Caco-2 (cell line): ENCODE measurements at regions of chr3 and their contacts with region 1.

Region 1: GRCh38 chr3:13895155-13896105 is 15.6 kb upstream of the WNT7A start:
- DNase-seq: peak; percentile 93 to 95
- H3K4me3 ChIP-seq: peak overlapping the region; percentile 53
- H3K4me3 Mint-ChIP-seq: peak overlapping the region; percentile 85
- H3K27ac Mint-ChIP-seq: peak overlapping the region; percentile 54
- H3K4me1 ChIP-seq: no peaks in the 10 kb centered on the region
- H3K4me1 Mint-ChIP-seq: no peaks in the 10 kb centered on the region
- H3K27me3 ChIP-seq: no peaks in the 10 kb centered on the region
- H3K27me3 Mint-ChIP-seq: no peaks in the 10 kb centered on the region
- CTCF ChIP-seq: no peak

Region 2: DNA sequence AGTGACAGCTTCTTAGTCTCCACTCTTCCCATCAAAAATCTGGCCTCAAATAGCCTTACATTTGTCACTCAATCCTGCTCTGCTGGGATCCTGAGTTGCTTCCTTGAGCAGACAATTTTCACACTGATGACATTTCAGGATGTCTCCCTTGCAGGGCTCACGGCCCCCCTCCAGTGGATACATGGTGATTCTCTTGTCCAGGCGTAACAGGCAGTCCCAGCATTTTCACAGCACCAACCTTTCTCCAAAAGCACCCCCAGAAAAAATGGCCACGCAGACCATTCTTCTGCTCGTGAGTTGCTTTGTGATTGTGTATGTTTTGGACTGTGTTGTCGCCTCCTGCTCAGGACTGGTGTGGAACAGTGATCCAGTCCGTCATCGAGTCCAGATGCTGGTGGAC is 31.9 kb after region 1 on chr3:
- CTCF ChIA-PET with region 1: no interaction called
- POLR2A ChIA-PET with region 1: no interaction called
- intact Hi-C with region 1: loop called (anchors 2 kb)
- DNase-seq: peak in 1 of 2 experiments; percentile 43
- H3K4me3 ChIP-seq: no peak overlapping the region
- H3K4me3 Mint-ChIP-seq: no peak overlapping the region
- H3K27ac Mint-ChIP-seq: no peak overlapping the region
- H3K4me1 ChIP-seq: no peaks in the 10 kb centered on the region
- H3K4me1 Mint-ChIP-seq: no peaks in the 10 kb centered on the region
- H3K27me3 ChIP-seq: no peaks in the 10 kb centered on the region
- H3K27me3 Mint-ChIP-seq: peaks cover 4% of the 10 kb centered on the region
- CTCF ChIP-seq: peak; percentile 20 to 61

Region 3: GRCh38 chr3:14113965-14114635 is 218.7 kb after region 1 on chr3:
- CTCF ChIA-PET with region 1: interaction called, 38 read pairs
- POLR2A ChIA-PET with region 1: no interaction called
- intact Hi-C with region 1: loop called (anchors 1 kb)
- DNase-seq: peak; percentile 62 to 66
- H3K4me3 ChIP-seq: no peak overlapping the region
- H3K4me3 Mint-ChIP-seq: no peak overlapping the region
- H3K27ac Mint-ChIP-seq: no peak overlapping the region
- H3K4me1 ChIP-seq: peaks cover 8% of the 10 kb centered on the region; the same call in 1 of the 2 replicates
- H3K4me1 Mint-ChIP-seq: no peaks in the 10 kb centered on the region
- H3K27me3 ChIP-seq: no peaks in the 10 kb centered on the region
- H3K27me3 Mint-ChIP-seq: no peaks in the 10 kb centered on the region
- CTCF ChIP-seq: peak; percentile 42 to 68

Region 4: GRCh38 chr3:14144423-14145075 is 249.1 kb after region 1 on chr3:
- CTCF ChIA-PET with region 1: interaction called, 12 read pairs
- POLR2A ChIA-PET with region 1: interaction called, 3 read pairs
- intact Hi-C with region 1: no loop called
- DNase-seq: peak; percentile 77 to 85
- H3K4me3 ChIP-seq: no peak overlapping the region
- H3K4me3 Mint-ChIP-seq: peak overlapping the region; percentile 47
- H3K27ac Mint-ChIP-seq: peak overlapping the region; percentile 93
- H3K4me1 ChIP-seq: peaks cover 26% of the 10 kb centered on the region
- H3K4me1 Mint-ChIP-seq: peaks cover 14% of the 10 kb centered on the region
- H3K27me3 ChIP-seq: no peaks in the 10 kb centered on the region
- H3K27me3 Mint-ChIP-seq: no peaks in the 10 kb centered on the region
- CTCF ChIP-seq: no peak

Region 5: DNA sequence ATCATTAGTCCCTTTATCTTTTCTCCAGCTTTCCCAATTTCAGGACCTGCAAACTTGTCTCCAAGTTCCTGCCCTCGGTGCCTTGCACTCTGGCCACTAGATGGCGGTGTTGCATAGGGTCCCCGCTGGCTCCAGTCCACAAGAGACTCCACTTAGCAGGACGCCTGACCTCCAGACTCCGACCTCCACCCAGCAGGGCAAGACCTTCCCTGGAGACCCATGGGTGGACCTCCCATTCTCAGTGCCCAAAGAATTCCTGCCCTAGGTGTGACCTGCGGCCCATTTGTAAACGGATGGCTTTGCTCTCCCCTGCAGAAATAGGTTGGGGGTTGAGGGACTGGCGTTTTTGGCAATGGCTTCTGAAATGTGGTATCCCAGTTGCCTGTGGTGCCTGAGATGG is 365.8 kb after region 1 on chr3:
- CTCF ChIA-PET with region 1: no interaction called
- POLR2A ChIA-PET with region 1: no interaction called
- intact Hi-C with region 1: loop called (anchors 5 kb)
- DNase-seq: peak; percentile 87 to 91
- H3K4me3 ChIP-seq: no peak overlapping the region
- H3K4me3 Mint-ChIP-seq: no peak overlapping the region
- H3K27ac Mint-ChIP-seq: no peak overlapping the region
- H3K4me1 ChIP-seq: peaks cover 29% of the 10 kb centered on the region
- H3K4me1 Mint-ChIP-seq: peaks cover 27% of the 10 kb centered on the region
- H3K27me3 ChIP-seq: no peaks in the 10 kb centered on the region
- H3K27me3 Mint-ChIP-seq: no peaks in the 10 kb centered on the region
- CTCF ChIP-seq: peak; percentile 87 to 97